MCF 10A (cell line): ENCODE measurements at regions of chr7 and their contacts with region 1.

Region 1: DNA sequence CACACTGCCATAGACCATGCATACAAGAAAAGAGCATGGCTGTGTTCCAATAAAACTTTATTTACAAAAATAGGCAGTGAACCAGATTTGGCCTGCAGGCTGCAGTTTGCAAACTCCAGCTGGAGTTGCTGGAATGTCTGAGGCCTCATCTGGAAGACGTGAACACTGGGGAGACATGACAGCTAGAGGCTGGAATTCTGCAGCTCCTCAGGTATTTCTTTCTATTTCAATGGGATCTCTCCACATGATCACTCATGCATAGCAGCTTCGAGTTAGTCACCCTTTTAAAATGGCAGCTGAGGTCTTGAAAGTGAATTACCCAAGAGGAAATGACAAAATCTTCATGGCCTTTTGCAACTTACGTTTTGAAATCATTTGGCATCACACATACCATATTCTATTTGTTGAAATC is 52.6 kb upstream of the BET1 start:
- DNase-seq: peak; percentile 91
- H3K4me3 Mint-ChIP-seq: no peak overlapping the region
- H3K27ac Mint-ChIP-seq: no peak overlapping the region
- H3K4me1 Mint-ChIP-seq: peaks cover 13% of the 10 kb centered on the region
- H3K27me3 Mint-ChIP-seq: no peaks in the 10 kb centered on the region
- CTCF ChIP-seq: no peak

Region 2: GRCh38 chr7:94045581-94045980 is 11.2 kb before region 1 on chr7:
- CTCF ChIA-PET with region 1: no interaction called
- POLR2A ChIA-PET with region 1: interaction called, 14 read pairs
- intact Hi-C with region 1: no loop called
- DNase-seq: no peak
- H3K4me3 Mint-ChIP-seq: no peak overlapping the region
- H3K27ac Mint-ChIP-seq: no peak overlapping the region
- H3K4me1 Mint-ChIP-seq: peaks cover 16% of the 10 kb centered on the region
- H3K27me3 Mint-ChIP-seq: no peaks in the 10 kb centered on the region
- CTCF ChIP-seq: no peak

Region 3: DNA sequence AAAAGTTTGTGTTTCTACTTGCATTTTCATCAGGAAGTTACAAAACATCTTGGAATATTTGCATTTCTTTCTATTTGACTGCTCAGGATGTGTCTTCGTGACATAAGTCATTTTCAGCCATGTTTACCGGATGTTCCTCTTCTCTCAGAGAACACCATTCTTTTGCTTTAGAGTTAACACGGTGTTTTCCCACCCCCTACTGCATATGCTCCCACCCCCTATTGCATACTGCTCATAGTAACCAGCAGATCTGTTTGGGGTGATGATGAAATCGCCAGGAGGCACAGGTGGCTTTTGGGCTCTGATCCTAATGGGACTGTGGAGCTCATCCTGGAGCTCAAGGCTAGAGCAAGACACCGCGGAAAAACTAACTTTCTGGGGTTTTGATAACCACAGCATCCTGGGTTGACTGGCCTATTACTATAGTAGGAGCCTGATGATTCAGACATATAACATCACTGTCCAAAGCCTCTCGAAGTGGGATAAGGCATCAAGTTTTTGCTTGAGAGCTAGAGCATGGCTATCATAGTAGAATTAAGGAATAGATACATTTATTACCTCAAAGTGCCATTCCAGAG is 12.4 kb after region 1 on chr7:
- CTCF ChIA-PET with region 1: interaction called, 5 read pairs
- POLR2A ChIA-PET with region 1: interaction called, 31 read pairs
- intact Hi-C with region 1: no loop called
- DNase-seq: no peak
- H3K4me3 Mint-ChIP-seq: no peak overlapping the region
- H3K27ac Mint-ChIP-seq: no peak overlapping the region
- H3K4me1 Mint-ChIP-seq: peaks cover 17% of the 10 kb centered on the region
- H3K27me3 Mint-ChIP-seq: no peaks in the 10 kb centered on the region
- CTCF ChIP-seq: no peak